WTC11 (cell line): ENCODE measurements at regions of chr19 and their contacts with region 1.

Region 1: DNA sequence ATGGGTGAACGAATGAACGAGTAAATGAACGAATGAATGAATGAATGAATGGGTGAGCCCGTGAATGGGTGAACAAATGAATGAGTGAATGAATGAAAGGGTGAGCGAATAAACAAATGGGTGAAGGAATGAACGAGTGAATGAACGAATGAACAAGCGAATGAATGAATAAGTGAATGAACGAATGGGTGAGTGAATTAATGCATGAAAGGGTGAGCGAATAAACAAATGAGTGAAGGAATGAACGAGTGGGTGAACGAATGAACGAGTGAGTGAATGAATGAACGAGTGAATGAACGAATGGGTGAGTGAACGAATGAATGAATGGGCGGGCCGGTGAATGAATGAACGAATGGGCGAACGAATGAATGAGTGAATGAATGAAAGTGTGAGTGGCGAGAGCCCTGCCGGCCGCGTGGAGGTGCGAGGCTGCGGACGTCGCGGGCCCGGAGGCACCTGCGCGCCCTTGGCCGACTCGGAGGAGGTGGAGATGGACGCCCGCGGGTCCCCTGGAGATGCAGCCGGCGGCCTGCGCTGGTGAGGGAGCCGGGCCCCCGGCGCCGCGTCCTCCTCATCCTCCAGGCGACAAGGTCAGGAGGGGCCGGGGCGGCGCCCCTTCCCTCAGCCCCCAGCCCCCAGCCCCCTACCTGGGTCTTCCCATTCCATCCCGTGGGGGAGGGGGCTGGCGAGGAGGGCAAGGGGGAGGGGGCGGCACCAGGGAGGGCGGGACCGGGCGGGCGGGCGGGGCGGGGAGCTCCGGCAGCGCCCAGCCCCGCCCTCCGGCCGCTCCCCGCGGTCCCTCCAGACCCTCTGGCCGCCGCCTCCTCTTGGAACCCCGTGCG is 15.4 kb downstream of the ANKRD24 start:
- DNase-seq: peak; percentile 77
- ATAC-seq: peak; percentile 72
- H3K4me3 Mint-ChIP-seq: peak overlapping the region; percentile 70
- H3K27ac Mint-ChIP-seq: no peak overlapping the region; the same call in 1 of the 2 replicates
- H3K4me1 Mint-ChIP-seq: peaks cover 23% of the 10 kb centered on the region
- H3K27me3 Mint-ChIP-seq: peaks cover 53% of the 10 kb centered on the region
- CTCF ChIP-seq: no peak

Region 2: GRCh38 chr19:4123615-4124568 is 74.0 kb before region 1 on chr19 and contains the start of gene MAP2K2:
- CTCF ChIA-PET with region 1: no interaction called
- POLR2A ChIA-PET with region 1: no interaction called
- DNase-seq: peak; percentile 96
- ATAC-seq: peak; percentile 88
- H3K4me3 Mint-ChIP-seq: peak within 1 kb of the TSS; percentile 94
- H3K27ac Mint-ChIP-seq: peak within 1 kb of the TSS; percentile 64
- H3K4me1 Mint-ChIP-seq: peaks cover 11% of the 10 kb centered on the region
- H3K27me3 Mint-ChIP-seq: 0 out of 2 replicates have a peak, but pooled peaks cover 2% of the 10 kb centered on the region
- CTCF ChIP-seq: no peak
- total RNA-seq, gene MAP2K2: 175 to 177 TPM (median 176 TPM) in 3 replicates

Region 3: DNA sequence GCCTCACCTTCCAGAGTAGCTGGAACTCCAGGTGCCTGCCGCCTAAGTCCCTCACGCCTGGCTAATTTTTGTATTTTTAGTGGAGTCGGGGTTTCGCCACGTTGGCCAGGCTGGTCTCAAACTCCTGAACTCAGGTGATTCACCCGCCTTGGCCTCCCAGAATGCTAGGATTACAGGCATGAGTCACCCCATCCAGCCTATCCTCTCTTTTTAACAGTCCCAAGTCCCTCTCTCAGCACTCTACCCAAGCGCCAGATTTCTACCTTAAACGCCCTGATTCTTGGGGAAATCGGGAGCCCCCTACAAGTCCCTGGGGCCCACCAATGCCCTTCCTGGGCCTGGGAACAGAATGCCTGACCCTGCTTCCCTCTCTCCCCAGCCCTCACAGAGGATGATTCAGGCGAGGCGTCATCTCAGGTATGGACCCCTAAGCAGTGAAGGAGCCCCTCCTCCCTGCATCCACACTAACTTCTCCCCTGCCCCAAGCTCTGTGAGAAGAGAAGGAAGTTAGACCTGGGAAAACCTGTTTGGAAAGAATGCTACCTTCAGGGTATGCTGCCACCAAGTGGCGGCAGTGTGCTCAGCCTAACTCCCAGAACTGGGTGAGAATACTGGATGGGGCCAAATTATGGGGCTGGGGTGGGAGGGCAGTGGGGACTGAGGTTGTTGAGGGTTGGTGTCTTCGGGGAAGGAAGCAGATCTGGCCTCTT is 10.7 kb after region 1 on chr19:
- CTCF ChIA-PET with region 1: interaction called, 13 read pairs
- POLR2A ChIA-PET with region 1: no interaction called
- DNase-seq: no peak
- ATAC-seq: peak; percentile 57
- H3K4me3 Mint-ChIP-seq: no peak overlapping the region
- H3K27ac Mint-ChIP-seq: peak overlapping the region; percentile 78
- H3K4me1 Mint-ChIP-seq: peaks cover 6% of the 10 kb centered on the region; the same call in 1 of the 2 replicates
- H3K27me3 Mint-ChIP-seq: no peaks in the 10 kb centered on the region
- CTCF ChIP-seq: no peak

Region 4: GRCh38 chr19:4224470-4224869 is 26.6 kb after region 1 on chr19:
- CTCF ChIA-PET with region 1: no interaction called
- POLR2A ChIA-PET with region 1: no interaction called
- DNase-seq: no peak
- ATAC-seq: no peak
- H3K4me3 Mint-ChIP-seq: no peak overlapping the region
- H3K27ac Mint-ChIP-seq: no peak overlapping the region
- H3K4me1 Mint-ChIP-seq: no peaks in the 10 kb centered on the region
- H3K27me3 Mint-ChIP-seq: no peaks in the 10 kb centered on the region; the same call in 1 of the 2 replicates
- CTCF ChIP-seq: no peak

Region 5: GRCh38 chr19:4360641-4361151 is 162.8 kb after region 1 on chr19:
- CTCF ChIA-PET with region 1: no interaction called
- POLR2A ChIA-PET with region 1: no interaction called
- DNase-seq: no peak
- ATAC-seq: peak; percentile 18
- H3K4me3 Mint-ChIP-seq: no peak overlapping the region
- H3K27ac Mint-ChIP-seq: peak overlapping the region; percentile 27; the same call in 1 of the 2 replicates
- H3K4me1 Mint-ChIP-seq: peaks cover 7% of the 10 kb centered on the region
- H3K27me3 Mint-ChIP-seq: no peaks in the 10 kb centered on the region
- CTCF ChIP-seq: no peak